ENCODE measurements at regions of chrX and their contacts with region 1.

Region 1: GRCh38 chrX:154918060-154918483 is 31.9 kb downstream of the F8A1 start:
- DNase-seq: peak; percentile 30 to 68 (median 33)
- ATAC-seq: peak; percentile 87
- H3K4me3 ChIP-seq: peak overlapping the region; percentile 29
- H3K27ac ChIP-seq: no peak overlapping the region; the same call in 2 of the 3 replicates
- H3K4me1 ChIP-seq: no peaks in the 10 kb centered on the region; a peak in 1 of 5 replicates
- H3K27me3 ChIP-seq: no peaks in the 10 kb centered on the region
- CTCF ChIP-seq: peak; percentile 62 to 73 (median 73); a peak in 5 of 6 replicates
- EP300 ChIP-seq: no peak
- POLR2A ChIP-seq: no peak
- RAD21 ChIP-seq: peak; percentile 59 to 87

Region 2: DNA sequence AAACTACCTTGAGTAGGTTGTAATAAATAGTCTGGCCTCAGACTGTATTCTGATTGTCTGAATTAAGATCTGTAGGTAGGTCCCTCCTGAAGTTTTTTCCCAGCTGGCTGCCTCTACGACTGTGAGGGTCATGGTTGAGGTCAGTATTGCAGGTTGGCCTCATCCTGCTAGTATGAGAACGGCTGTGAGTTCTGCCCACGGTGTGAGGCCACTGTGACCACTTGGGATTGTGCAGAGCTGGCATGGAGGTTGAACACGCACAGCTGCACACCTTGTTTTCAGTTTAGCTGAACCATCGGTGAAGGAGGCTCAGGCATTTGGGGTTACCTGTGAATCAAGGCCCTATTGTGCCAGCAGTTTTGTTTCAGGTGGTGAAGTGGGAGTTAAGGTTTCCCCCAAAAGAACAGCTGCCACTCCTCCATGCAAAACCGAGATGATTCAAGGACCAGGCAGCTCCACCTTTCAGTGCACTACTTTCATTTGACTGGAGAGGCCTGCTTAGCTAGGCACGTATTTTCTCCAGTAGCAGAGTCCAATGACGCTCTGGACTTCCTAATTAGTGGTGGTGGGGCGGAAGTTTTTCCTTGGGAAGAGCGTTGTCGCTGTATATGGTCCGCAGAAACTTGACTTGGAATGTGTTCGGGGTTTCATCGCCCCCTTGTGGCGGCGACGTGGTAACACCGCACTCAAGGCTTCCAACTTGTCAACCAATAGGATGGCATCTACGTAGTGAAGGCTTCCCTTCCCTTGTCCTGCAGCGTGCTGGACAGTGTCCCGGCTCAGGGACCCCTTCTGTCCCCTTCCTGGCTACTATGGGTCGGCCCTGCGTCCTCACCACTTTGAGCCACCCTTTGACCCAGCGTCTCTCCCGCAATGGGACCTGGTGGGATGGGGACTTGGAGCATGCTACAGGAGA is 139.1 kb after region 1 on chrX:
- CTCF ChIA-PET with region 1: interaction called, 3 read pairs
- POLR2A ChIA-PET with region 1: no interaction called
- in situ Hi-C with region 1: no loop called
- intact Hi-C with region 1: loop called (anchors 1 kb)
- DNase-seq: peak; percentile 52 to 82 (median 65)
- ATAC-seq: peak; percentile 97
- H3K4me3 ChIP-seq: no peak overlapping the region
- H3K27ac ChIP-seq: no peak overlapping the region
- H3K4me1 ChIP-seq: peaks cover 0 to 9% of the 10 kb centered on the region in 2 experiments; a peak in 3 of 5 replicates
- H3K27me3 ChIP-seq: no peaks in the 10 kb centered on the region
- CTCF ChIP-seq: peak; percentile 72 to 84 (median 76)
- EP300 ChIP-seq: no peak
- POLR2A ChIP-seq: no peak
- RAD21 ChIP-seq: peak; percentile 65 to 80

Region 3: DNA sequence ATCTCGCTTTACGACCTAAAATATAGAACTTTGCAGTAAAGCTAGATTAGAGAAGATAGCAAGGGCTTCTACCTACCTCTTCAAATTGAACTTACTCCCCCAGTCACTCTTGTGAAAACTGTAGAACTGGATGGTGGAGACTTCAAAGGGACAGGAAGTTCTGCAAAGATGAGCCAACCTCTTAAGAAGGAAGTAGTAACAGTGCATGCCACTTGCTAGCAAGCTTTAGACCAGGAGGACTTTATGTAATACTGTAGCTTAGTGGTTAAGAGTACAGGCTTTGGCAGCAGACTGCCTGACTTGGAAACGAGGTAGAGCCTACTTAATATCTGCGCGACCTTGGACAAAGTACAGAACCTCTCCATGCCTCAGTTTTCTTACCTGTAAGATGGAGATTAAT is 270.7 kb after region 1 on chrX:
- CTCF ChIA-PET with region 1: no interaction called
- POLR2A ChIA-PET with region 1: no interaction called
- in situ Hi-C with region 1: no loop called
- intact Hi-C with region 1: no loop called
- DNase-seq: no peak
- ATAC-seq: no peak
- H3K4me3 ChIP-seq: no peak overlapping the region
- H3K27ac ChIP-seq: no peak overlapping the region
- H3K4me1 ChIP-seq: no peaks in the 10 kb centered on the region
- H3K27me3 ChIP-seq: no peaks in the 10 kb centered on the region
- CTCF ChIP-seq: no peak
- EP300 ChIP-seq: no peak
- POLR2A ChIP-seq: no peak
- RAD21 ChIP-seq: no peak

Region 4: DNA sequence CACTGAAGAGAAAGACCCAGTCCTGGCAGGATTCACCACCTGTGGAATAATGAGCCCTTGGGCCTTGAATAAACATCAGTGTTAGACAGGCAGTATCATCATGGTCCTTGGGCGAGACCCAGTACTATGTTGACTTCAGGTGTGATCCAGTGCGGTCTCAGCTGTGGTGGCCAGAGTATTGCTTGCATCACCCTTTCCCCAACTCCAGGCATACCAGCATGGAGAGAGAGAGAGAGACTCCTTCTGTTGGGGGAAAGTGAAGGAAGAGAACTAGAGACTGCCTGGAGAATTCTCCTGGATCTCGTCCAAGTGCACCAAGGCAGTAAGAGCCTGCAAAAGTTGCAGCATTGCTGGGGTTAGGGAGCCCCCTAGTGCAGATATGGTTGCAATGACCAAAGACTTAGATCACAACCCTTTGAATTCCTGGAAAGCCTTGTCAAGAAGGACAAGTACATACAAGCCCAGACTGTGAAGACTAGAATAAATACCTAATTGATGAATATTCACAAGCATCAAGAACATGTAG is 902.0 kb after region 1 on chrX:
- CTCF ChIA-PET with region 1: no interaction called
- POLR2A ChIA-PET with region 1: no interaction called
- in situ Hi-C with region 1: no loop called
- intact Hi-C with region 1: loop called (anchors 5 kb)
- DNase-seq: peak; percentile 28 to 80 (median 44)
- ATAC-seq: peak; percentile 86
- H3K4me3 ChIP-seq: no peak overlapping the region
- H3K27ac ChIP-seq: no peak overlapping the region
- H3K4me1 ChIP-seq: no peaks in the 10 kb centered on the region
- H3K27me3 ChIP-seq: no peaks in the 10 kb centered on the region
- CTCF ChIP-seq: peak; percentile 71 to 83 (median 77)
- EP300 ChIP-seq: no peak
- POLR2A ChIP-seq: no peak
- RAD21 ChIP-seq: peak; percentile 83 to 92

Measured in K562 (cell line).